Breast epithelium (tissue), 4 donors: ENCODE measurements at regions of chr7 and their contacts with region 1.

Region 1: DNA sequence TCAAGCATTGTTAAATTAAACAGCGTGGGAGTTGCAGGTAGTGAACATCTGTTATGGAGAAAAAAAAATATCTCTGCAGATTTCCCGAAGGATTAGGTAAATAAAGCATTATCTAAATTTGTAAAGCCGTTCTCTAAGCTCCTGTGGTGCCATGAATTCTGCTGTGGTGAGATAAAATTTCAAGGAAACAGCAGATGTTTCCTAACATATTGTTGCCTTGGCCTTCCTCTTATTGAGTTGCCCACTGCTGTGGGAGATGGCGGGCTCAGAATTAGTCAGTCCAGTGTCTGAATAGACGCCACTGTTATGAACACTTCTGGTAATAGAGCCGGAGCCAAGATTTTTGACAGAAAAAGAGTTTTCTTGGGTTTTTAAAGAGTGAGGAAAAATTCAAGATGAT is 82.6 kb upstream of the ELMO1 start:
- DNase-seq: no peak
- H3K4me3 ChIP-seq: no peak overlapping the region
- H3K27ac ChIP-seq: no peak overlapping the region
- H3K4me1 ChIP-seq: no peaks in the 10 kb centered on the region
- H3K27me3 ChIP-seq: no peaks in the 10 kb centered on the region
- CTCF ChIP-seq: no peak
- POLR2A ChIP-seq: no peak

Region 2: GRCh38 chr7:37016064-37016878 is 515.0 kb before region 1 on chr7:
- intact Hi-C with region 1: no loop called
- DNase-seq: no peak
- H3K4me3 ChIP-seq: no peak overlapping the region
- H3K27ac ChIP-seq: no peak overlapping the region
- H3K4me1 ChIP-seq: no peaks in the 10 kb centered on the region
- H3K27me3 ChIP-seq: no peaks in the 10 kb centered on the region
- CTCF ChIP-seq: no peak
- POLR2A ChIP-seq: no peak

Region 3: DNA sequence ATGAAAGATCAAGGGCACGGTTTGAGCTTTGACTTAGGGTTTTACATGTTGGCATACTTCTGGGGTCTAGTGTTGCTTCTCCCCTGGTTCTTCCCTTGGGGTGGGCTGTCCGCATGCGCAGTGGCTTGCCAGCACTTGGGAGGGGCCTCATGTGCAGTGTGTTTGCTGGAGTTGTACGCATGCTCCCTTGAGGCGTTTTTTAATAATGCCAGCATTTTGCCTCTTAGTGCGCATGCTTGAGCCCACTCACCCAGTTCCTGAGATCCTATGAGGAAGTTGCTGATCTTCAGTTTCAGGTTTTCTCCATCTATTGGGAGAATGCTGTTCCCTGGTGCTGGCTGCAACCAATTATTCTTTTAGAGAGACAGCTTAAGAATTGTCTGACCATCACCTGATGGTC is 38.9 kb after region 1 on chr7:
- intact Hi-C with region 1: loop called (anchors 2 kb)
- DNase-seq: no peak
- H3K4me3 ChIP-seq: no peak overlapping the region
- H3K27ac ChIP-seq: no peak overlapping the region
- H3K4me1 ChIP-seq: no peaks in the 10 kb centered on the region
- H3K27me3 ChIP-seq: no peaks in the 10 kb centered on the region
- CTCF ChIP-seq: no peak
- POLR2A ChIP-seq: no peak